PC-9 (cell line): ENCODE measurements at regions of chr1 and their contacts with region 1.

Region 1: DNA sequence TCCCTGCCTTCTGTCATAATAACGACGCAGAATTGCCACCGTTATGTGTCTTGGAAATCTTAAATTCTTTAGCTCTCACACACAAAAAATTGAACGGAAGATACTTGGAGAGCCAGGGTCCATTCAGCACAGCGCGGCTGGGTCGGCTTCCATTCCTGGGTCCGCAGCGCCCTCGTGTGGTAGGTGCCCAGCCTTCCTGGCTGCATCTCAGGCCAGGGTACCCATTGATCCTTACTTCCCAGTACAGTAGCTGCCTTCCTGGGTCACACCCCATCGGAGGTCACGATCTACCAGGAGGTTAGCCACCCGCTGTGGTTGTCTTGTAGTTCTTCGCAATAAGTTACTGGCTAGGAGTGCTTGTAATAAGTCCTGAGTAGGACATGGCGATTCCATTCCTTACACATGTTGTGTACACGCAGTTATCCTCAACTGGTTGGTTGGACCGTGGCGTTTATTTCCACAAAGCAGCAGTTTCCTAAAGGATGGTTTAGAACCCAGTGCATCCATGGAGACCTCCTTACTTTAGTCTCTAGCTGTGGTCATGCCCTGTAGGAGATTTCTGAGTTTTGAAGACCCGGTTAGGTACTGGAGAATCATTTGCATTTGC is 9.9 kb upstream of the MTARC1 start:
- DNase-seq: peak in 1 of 2 experiments; percentile 81
- H3K4me3 ChIP-seq: no peak overlapping the region
- H3K27ac ChIP-seq: no peak overlapping the region
- H3K4me1 ChIP-seq: no peaks in the 10 kb centered on the region
- H3K27me3 ChIP-seq: no peaks in the 10 kb centered on the region
- CTCF ChIP-seq: peak; percentile 94

Region 2: GRCh38 chr1:219990782-219991510 is 785.9 kb before region 1 on chr1:
- CTCF ChIA-PET with region 1: no interaction called
- POLR2A ChIA-PET with region 1: no interaction called
- intact Hi-C with region 1: loop called (anchors 1 kb)
- DNase-seq: no peak
- H3K4me3 ChIP-seq: no peak overlapping the region
- H3K27ac ChIP-seq: no peak overlapping the region
- H3K4me1 ChIP-seq: no peaks in the 10 kb centered on the region
- H3K27me3 ChIP-seq: no peaks in the 10 kb centered on the region
- CTCF ChIP-seq: peak; percentile 64

Region 3: GRCh38 chr1:220189750-220190347 is 587.0 kb before region 1 on chr1:
- CTCF ChIA-PET with region 1: interaction called, 3 read pairs
- POLR2A ChIA-PET with region 1: no interaction called
- intact Hi-C with region 1: loop called (anchors 1 kb)
- DNase-seq: no peak
- H3K4me3 ChIP-seq: no peak overlapping the region
- H3K27ac ChIP-seq: no peak overlapping the region
- H3K4me1 ChIP-seq: no peaks in the 10 kb centered on the region
- H3K27me3 ChIP-seq: no peaks in the 10 kb centered on the region
- CTCF ChIP-seq: peak; percentile 69

Region 4: DNA sequence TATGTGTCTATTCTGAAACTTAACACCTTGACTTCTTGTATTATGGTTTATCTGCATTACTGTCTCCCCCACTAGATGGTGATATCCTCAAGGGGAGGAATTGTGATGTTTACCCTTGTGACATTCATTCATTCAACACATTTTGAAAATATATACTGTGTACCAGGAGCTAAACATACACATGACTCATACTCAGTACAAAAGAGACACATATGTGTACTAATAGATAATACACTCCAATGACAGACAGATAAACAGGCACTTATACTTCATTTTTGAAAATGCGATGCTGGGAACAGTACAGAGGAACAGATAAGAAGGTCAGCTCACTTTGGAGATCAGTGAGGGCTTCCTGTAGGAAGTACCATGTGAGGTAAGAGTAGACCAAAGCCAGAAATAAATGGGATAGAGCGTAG is 495.7 kb before region 1 on chr1:
- CTCF ChIA-PET with region 1: interaction called, 7 read pairs
- POLR2A ChIA-PET with region 1: no interaction called
- intact Hi-C with region 1: loop called (anchors 1 kb)
- DNase-seq: peak in 1 of 2 experiments; percentile 64
- H3K4me3 ChIP-seq: no peak overlapping the region
- H3K27ac ChIP-seq: no peak overlapping the region
- H3K4me1 ChIP-seq: no peaks in the 10 kb centered on the region
- H3K27me3 ChIP-seq: no peaks in the 10 kb centered on the region
- CTCF ChIP-seq: peak; percentile 84

Region 5: GRCh38 chr1:220370031-220370700 is 406.7 kb before region 1 on chr1:
- CTCF ChIA-PET with region 1: no interaction called
- POLR2A ChIA-PET with region 1: no interaction called
- intact Hi-C with region 1: loop called (anchors 10 kb)
- DNase-seq: peak; percentile 77 to 95
- H3K4me3 ChIP-seq: peak overlapping the region; percentile 10; the same call in 1 of the 2 replicates
- H3K27ac ChIP-seq: peak overlapping the region; percentile 94
- H3K4me1 ChIP-seq: peaks cover 54% of the 10 kb centered on the region
- H3K27me3 ChIP-seq: no peaks in the 10 kb centered on the region
- CTCF ChIP-seq: no peak

Region 6: DNA sequence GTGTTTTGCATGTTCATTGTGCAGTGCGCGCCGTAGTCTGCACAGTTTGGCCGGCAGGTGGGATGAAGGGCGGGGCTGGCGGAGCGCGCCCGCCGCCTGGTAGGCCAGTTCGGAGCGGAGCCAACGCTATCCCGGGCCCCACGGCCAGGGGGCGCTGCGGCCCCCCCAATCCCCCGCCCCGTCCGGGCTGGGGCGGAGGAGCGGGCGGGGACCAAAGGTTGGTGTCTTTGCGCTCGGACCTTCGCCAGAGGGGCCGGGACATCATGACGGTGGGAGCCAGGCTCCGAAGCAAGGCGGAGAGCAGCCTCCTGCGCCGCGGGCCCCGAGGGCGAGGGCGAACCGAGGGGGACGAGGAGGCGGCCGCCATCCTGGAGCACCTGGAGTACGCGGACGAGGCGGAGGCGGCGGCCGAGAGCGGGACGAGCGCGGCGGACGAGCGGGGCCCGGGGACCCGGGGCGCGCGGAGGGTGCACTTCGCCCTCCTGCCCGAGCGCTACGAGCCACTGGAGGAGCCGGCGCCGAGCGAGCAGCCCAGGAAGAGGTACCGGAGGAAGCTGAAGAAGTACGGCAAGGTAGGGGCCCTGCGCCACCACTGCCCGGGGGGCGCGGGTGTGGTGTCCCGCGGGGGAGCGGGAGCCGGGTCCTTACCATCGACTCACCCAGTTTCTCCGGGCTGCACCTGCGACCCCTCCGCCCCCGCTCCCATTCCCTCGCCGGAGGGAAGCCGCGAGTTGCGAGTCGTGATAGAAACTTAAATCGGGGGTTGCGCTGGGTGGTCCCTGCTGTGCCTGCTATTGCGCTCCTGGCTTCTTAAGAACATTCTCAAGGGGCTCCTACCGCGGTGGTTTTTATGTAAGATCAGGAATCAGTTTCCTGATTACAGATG is 86.4 kb before region 1 on chr1 and contains the start of gene C1orf115:
- CTCF ChIA-PET with region 1: no interaction called
- POLR2A ChIA-PET with region 1: no interaction called
- intact Hi-C with region 1: loop called (anchors 1 kb)
- DNase-seq: peak; percentile 55 to 90
- H3K4me3 ChIP-seq: peak within 1 kb of the TSS; percentile 77
- H3K27ac ChIP-seq: no peak within 1 kb of the TSS
- H3K4me1 ChIP-seq: no peaks in the 10 kb centered on the region
- H3K27me3 ChIP-seq: no peaks in the 10 kb centered on the region
- CTCF ChIP-seq: peak; percentile 98
- total RNA-seq, gene C1orf115: 5.6 and 6.5 TPM in 2 replicates

Region 7: GRCh38 chr1:220803401-220804201 is 26.8 kb after region 1 on chr1:
- CTCF ChIA-PET with region 1: interaction called, 4 read pairs
- POLR2A ChIA-PET with region 1: interaction called, 4 read pairs
- intact Hi-C with region 1: loop called (anchors 1 kb)
- DNase-seq: peak in 1 of 2 experiments; percentile 44
- H3K4me3 ChIP-seq: no peak overlapping the region
- H3K27ac ChIP-seq: no peak overlapping the region
- H3K4me1 ChIP-seq: peaks cover 3% of the 10 kb centered on the region
- H3K27me3 ChIP-seq: no peaks in the 10 kb centered on the region
- CTCF ChIP-seq: peak; percentile 92